ENCODE measurements at regions of chr3 and their contacts with region 1.

Region 1: DNA sequence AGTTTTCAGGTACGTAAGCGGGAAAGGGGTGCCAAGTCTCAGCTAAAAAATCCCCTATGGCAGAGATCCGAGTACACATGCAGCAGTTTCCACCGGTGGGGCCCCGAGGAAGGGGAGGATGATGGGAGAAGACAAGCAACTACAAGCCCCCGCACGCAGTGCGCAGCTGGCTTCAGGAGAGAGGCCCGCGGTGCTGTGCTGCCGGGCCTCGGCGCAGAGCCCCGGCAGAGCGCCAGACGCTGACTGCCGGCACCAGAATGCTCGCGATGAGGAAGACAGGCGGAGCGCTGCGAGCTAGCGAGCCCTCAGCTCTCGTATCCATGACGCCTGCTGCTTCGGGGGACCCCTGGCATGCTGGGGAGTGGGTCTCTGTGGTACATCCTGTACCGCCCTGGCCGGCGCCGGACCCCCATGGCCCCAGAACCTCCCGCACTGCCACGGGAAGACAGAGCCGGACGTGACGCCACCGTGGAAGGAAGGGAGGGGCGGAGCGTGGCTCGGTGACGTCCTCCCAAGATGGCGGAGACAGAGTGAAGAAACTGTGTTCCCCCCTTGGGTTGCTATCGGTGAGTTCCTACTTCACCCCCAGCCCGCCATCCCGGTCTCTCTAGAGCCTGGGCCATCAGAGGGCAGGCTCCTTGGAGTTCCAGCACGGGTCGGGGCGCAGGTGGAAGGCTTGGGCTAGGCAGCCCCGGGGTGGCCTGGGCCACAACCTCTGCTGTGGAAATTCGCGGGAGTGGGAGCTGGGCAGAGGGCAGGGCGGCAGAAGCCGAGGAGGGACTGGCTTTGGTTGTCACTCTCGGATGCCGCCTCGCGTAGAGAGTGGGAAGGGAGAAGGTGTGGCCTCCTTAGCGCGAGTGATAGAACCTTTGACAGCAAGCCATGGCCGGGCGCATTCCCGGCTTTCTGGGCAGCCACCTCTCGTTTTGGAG is at the start of gene MYNN:
- DNase-seq: peak; percentile 96
- H3K4me3 ChIP-seq: peak within 1 kb of the TSS; percentile 68 to 94 (median 87)
- H3K27ac ChIP-seq: peak within 1 kb of the TSS; percentile 91 to 99 (median 98)
- H3K4me1 ChIP-seq: peaks cover 0 to 31% (median 23%) of the 10 kb centered on the region in 4 donors
- H3K27me3 ChIP-seq: no peaks in the 10 kb centered on the region
- CTCF ChIP-seq: no peak
- EP300 ChIP-seq: no peak
- POLR2A ChIP-seq: peak; percentile 99
- total RNA-seq, gene MYNN: 15.5 to 24.4 (median 21.2) TPM

Region 2: DNA sequence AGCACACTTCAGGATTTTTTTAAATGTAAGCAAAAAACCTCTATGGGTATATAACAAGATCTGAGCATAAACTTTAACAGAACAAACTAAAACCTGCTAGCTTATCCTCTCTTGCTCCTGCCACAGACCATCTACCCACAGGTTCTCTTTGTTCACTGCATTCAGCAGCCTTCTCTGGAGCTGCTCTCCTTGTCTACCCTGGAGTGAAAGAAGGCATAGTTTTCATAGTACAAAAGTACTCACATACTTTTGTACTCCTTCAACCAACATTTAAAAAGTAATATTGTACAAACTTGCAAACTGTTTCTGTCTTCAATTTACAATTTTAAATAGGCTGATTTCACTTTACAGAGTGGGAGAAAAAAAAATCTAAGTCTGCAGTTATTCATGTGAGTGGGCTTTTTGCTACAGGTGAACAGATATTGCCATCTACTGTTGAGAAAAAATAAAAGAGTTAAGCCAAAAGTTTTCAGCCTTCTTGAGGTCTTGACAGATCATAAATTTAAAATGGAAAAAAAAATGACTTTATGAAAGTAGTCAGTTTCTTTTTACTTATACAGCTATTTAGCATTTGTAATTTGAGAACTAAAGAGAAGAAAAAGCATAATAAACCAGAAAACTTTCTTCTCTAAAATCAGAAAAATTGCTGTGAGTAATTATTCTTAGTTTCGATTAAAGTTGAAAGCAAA is 28.7 kb before region 1 on chr3:
- intact Hi-C with region 1: no loop called
- DNase-seq: no peak
- H3K4me3 ChIP-seq: no peak overlapping the region
- H3K27ac ChIP-seq: no peak overlapping the region
- H3K4me1 ChIP-seq: no peaks in the 10 kb centered on the region
- H3K27me3 ChIP-seq: peaks cover 0 to 4% (median 0%) of the 10 kb centered on the region in 3 donors
- CTCF ChIP-seq: peak in 1 of 4 experiments; percentile 19
- EP300 ChIP-seq: no peak
- POLR2A ChIP-seq: no peak

Region 3: GRCh38 chr3:169812332-169813235 is 39.4 kb after region 1 on chr3 and contains the starts of genes LRRC34 and LRRIQ4:
- intact Hi-C with region 1: loop called (anchors 5 kb)
- DNase-seq: peak; percentile 87
- H3K4me3 ChIP-seq: peak within 1 kb of the TSS; percentile 54 to 72 (median 58)
- H3K27ac ChIP-seq: peak within 1 kb of the TSS; percentile 73 to 82 (median 76)
- H3K4me1 ChIP-seq: peaks cover 0 to 24% (median 16%) of the 10 kb centered on the region in 4 donors
- H3K27me3 ChIP-seq: no peaks in the 10 kb centered on the region
- CTCF ChIP-seq: no peak
- EP300 ChIP-seq: no peak
- POLR2A ChIP-seq: no peak
- total RNA-seq, gene LRRC34: 1.1 to 3.9 (median 2.3) TPM
- total RNA-seq, gene LRRIQ4: not detected

Measured in sigmoid colon (tissue), 7 donors.